ENCODE measurements at regions of chr18 and their contacts with region 1.

Region 1: GRCh38 chr18:59139371-59140298 is at the start of gene SEC11C:
- DNase-seq: peak; percentile 96
- H3K4me3 Mint-ChIP-seq: peak within 1 kb of the TSS; percentile 94
- H3K27ac Mint-ChIP-seq: peak within 1 kb of the TSS; percentile 98
- H3K4me1 Mint-ChIP-seq: peaks cover 34% of the 10 kb centered on the region
- H3K27me3 Mint-ChIP-seq: peaks cover 19% of the 10 kb centered on the region
- total RNA-seq, gene SEC11C: 147 and 148 TPM in 2 replicates

Region 2: DNA sequence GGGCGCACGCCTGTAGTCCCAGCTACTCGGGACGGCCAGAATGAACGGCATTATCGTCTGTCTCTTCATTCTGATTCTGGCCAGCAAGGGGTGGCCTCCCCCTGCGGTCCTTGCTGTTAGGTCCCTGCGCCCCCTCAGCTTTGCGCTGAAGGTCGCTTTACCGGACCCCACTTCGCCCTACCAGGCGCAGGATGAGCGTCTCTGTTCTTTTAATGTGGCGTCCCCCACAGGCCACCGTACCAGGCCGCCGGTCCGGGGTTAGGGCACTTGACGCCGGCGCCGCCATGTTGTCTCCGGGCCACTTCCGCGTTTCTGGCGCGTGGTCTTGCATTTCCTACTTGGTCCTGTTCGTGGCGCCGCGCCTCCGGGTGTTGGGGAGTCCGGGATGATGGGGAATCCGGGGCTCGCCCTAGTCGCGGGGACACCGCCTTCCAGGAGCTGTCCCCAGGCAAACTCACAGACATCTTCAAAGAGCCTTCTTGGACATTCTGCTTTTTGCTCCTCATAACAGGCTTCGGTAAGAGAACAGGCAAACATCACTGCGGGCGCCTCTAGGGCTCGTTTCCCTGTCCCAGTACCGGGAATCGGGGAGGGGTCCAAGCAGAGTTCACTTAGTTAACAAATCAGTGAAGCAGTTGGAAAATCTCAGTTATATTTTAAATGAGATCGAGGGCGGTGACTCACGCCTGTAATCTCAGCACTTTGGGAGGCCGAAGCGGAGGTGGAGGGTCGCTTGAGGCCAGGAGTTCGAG is 1509.5 kb before region 1 on chr18:
- intact Hi-C with region 1: loop called (anchors 5 kb)
- DNase-seq: peak; percentile 89
- H3K4me3 Mint-ChIP-seq: peak overlapping the region; percentile 96
- H3K27ac Mint-ChIP-seq: peak overlapping the region; percentile 94
- H3K4me1 Mint-ChIP-seq: peaks cover 9% of the 10 kb centered on the region
- H3K27me3 Mint-ChIP-seq: no peaks in the 10 kb centered on the region

Region 3: DNA sequence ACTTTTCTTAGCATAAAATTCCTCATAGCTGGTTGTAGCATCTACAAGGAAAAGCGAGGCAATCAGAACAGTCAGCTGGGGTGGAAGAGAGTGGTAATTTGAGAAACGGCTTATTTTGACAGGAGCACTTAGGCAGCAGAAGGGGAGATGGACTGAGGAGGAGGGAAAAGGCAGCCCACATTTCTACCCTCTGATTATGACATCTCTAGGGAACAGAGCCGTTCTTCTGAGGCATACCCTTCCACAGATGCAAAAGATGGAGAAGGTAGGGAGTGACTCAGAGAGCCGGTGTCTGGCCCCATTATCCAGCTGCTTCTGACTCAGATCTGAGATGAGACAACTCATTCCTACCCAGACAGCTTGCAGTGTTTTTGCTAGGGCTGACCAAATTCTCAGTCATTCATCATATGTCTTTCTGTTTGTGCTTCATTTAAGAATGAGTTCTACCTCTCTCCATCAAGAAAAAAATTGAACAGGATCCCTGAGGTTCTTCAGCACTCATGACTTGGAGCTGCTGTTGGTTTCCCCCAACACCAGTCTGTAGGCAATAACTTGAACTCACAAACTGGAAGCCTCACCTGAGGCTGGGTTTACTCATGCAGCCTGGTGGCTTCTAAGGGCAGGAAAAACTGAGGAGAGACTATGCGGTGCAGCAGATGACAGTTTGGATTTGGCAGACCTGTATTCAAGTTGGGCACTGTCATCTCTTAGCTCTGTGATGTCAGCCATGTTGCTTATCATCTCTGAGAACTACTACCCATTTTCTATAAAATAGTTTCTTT is 15.9 kb before region 1 on chr18:
- intact Hi-C with region 1: no loop called
- DNase-seq: no peak
- H3K4me3 Mint-ChIP-seq: no peak overlapping the region
- H3K27ac Mint-ChIP-seq: peak overlapping the region; percentile 13
- H3K4me1 Mint-ChIP-seq: no peaks in the 10 kb centered on the region
- H3K27me3 Mint-ChIP-seq: peaks cover 15% of the 10 kb centered on the region

Region 4: DNA sequence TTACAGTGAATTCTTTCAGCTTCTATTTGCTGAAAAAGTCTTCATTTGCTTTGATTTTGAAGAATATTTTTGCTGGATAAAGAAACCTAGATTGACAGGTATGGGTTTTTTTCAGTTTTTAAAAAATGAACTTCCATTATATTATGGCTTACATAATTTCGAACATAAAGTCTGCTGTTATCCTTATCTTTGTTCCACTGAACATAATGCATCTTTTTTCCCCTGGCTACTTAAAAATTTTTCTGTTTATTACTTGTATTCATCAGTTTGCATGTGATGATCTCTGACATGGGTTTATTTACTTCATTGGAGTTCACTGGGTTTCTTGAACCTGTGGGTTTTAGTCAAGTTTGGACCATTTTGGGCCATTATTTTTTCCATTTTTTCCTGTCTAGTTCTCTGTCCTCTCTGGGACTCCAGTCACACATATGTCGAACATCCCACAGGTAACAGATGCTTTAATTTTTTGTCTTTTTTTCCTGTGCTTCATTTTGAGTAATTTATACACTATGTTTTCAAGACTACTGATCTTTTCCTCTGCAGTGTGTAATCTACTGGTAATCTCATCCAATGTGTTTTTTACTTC is 33.1 kb after region 1 on chr18:
- intact Hi-C with region 1: loop called (anchors 5 kb)
- DNase-seq: no peak
- H3K4me3 Mint-ChIP-seq: no peak overlapping the region
- H3K27ac Mint-ChIP-seq: no peak overlapping the region
- H3K4me1 Mint-ChIP-seq: no peaks in the 10 kb centered on the region
- H3K27me3 Mint-ChIP-seq: peaks cover 5% of the 10 kb centered on the region